Activated CD8-positive, alpha-beta memory T cell treated with anti-CD3 and anti-CD28 coated beads, Interleukin-2, amount 10 ng/mL, durations not matched to agents 7 days and 5 days (primary cell): ENCODE measurements at regions of chr5 and their contacts with region 1.

Region 1: DNA sequence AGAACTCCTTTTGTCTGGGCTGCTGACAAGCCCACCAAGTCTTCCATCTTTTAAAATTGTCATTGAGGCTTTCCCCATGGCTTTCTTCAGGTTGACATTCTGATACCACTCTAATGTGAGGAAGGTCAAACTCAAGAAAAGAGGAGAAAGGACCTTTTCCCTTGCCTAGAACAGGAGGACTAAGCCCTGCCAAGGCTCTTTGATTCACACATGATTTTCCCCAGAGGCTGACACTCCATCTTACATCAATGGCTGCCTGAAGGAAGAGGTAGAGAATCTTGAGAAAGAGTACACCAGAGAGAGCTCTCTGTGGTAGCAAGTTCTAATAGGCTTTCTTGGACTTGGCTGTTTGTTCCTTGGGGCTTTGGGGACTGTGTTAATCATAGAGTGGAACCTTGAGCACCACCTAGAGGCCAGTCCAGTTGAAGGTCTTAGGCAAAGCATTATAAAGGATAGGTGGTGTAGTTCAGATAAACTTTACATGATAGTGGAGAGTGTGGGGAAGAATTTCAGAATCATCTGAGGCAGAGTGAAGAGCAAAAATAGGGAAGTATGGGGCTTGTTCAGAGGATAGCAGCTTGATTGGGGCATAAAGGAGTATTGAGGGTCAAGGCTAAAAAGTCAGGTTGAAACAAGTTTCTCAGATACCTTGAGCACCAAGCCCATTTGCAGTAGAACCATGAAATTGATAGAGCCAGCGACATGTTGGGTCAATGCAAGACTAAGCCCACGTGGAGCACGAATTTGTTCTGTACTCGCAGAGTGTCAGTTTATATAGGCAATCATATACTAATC is 36.7 kb downstream of the NDFIP1 start:
- DNase-seq: peak; percentile 75
- ATAC-seq: peak; percentile 89
- H3K4me3 Mint-ChIP-seq: no peak overlapping the region
- H3K27ac Mint-ChIP-seq: no peak overlapping the region
- H3K4me1 Mint-ChIP-seq: no peaks in the 10 kb centered on the region
- H3K27me3 Mint-ChIP-seq: no peaks in the 10 kb centered on the region

Region 2: GRCh38 chr5:141811287-141812155 is 333.8 kb before region 1 on chr5:
- CTCF ChIA-PET with region 1: no interaction called
- DNase-seq: peak; percentile 49
- ATAC-seq: peak; percentile 75
- H3K4me3 Mint-ChIP-seq: no peak overlapping the region
- H3K27ac Mint-ChIP-seq: no peak overlapping the region
- H3K4me1 Mint-ChIP-seq: peaks cover 5% of the 10 kb centered on the region
- H3K27me3 Mint-ChIP-seq: peaks cover 64% of the 10 kb centered on the region

Region 3: DNA sequence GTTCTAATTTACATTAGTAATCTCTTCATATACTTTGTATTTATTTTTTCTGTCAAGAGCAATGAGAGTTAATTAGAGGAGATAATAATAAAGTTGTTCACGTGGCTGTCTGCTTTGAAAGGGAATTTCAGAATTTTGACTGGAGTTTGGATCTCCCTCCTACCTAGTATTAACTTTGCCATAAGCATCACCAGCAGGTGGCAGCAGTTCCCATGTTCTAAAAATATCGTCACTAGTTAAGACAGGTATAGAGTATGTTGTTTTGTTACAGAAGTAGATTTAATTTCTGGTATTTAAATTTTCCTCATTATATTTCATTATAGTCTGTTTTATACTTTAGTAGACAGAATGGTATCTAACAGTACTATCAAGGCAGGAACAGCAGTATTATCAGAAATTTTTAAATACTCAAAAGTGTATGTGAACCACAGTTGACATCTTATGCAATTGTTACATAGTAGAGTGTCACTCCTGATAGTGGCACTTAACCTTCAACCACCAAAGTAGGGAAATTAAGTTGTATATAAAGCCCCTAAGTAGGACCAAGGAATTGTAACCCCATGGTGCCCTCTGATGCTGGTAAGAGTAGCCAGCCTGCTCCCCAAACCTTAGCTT is 152.8 kb before region 1 on chr5:
- CTCF ChIA-PET with region 1: interaction called, 58 read pairs
- DNase-seq: peak; percentile 84
- ATAC-seq: peak; percentile 71
- H3K4me3 Mint-ChIP-seq: no peak overlapping the region
- H3K27ac Mint-ChIP-seq: no peak overlapping the region
- H3K4me1 Mint-ChIP-seq: no peaks in the 10 kb centered on the region
- H3K27me3 Mint-ChIP-seq: no peaks in the 10 kb centered on the region

Region 4: GRCh38 chr5:142000703-142001484 is 144.4 kb before region 1 on chr5:
- CTCF ChIA-PET with region 1: interaction called, 19 read pairs
- DNase-seq: no peak
- ATAC-seq: no peak
- H3K4me3 Mint-ChIP-seq: no peak overlapping the region
- H3K27ac Mint-ChIP-seq: no peak overlapping the region
- H3K4me1 Mint-ChIP-seq: peaks cover 7% of the 10 kb centered on the region
- H3K27me3 Mint-ChIP-seq: peaks cover 2% of the 10 kb centered on the region

Region 5: DNA sequence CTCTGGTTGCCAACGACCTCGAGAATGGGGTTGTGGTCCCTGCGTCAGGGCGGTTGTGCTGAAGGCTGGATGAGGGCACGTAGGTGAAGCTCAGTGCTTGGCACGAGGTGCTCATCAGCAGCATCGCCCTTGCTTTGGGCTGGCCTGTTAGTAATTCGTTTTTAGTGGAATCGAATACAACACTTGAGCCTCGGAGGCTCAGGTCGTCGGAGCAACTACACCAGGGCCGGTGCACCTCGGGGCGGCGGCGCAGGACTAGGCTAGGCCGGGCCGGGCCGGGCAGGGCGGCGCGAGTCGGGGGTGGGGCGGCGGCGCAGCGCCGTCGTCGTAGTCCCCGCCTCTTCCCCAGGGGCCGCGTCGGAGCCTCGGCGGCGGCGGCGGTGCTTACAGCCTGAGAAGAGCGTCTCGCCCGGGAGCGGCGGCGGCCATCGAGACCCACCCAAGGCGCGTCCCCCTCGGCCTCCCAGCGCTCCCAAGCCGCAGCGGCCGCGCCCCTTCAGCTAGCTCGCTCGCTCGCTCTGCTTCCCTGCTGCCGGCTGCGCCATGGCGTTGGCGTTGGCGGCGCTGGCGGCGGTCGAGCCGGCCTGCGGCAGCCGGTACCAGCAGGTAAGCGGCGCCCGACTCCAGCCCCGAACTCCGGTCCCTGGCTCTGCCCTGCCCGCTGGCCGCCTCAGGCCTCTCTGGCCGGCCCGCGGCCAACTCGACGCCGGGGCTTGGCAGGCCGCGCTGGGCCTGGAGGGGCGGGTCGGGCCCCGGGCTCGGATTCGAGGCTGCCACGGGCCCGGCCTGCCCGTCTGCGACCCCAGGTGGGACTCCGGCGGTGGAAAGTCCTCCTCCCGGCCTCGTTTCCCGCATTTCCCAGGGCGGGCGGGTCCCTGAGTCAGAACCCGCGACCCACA is 36.6 kb before region 1 on chr5 and contains the start of gene NDFIP1:
- CTCF ChIA-PET with region 1: interaction called, 20 read pairs
- DNase-seq: peak; percentile 88
- ATAC-seq: peak; percentile 95
- H3K4me3 Mint-ChIP-seq: peak within 1 kb of the TSS; percentile 87
- H3K27ac Mint-ChIP-seq: peak within 1 kb of the TSS; percentile 89
- H3K4me1 Mint-ChIP-seq: peaks cover 44% of the 10 kb centered on the region
- H3K27me3 Mint-ChIP-seq: no peaks in the 10 kb centered on the region
- total RNA-seq, gene NDFIP1: 28.5 to 31.7 TPM